AG04449 (cell line): ENCODE measurements at regions of chr22 and their contacts with region 1.

Region 1: GRCh38 chr22:35611891-35612576 is 5.1 kb downstream of the MB start:
- DNase-seq: no peak
- H3K4me3 ChIP-seq: no peak overlapping the region
- CTCF ChIP-seq: no peak

Region 2: GRCh38 chr22:35622191-35622913 is 10.3 kb after region 1 on chr22:
- CTCF ChIA-PET with region 1: interaction called, 14 read pairs
- POLR2A ChIA-PET with region 1: no interaction called
- DNase-seq: no peak
- H3K4me3 ChIP-seq: no peak overlapping the region
- CTCF ChIP-seq: no peak

Region 3: GRCh38 chr22:35821654-35822053 is 209.6 kb after region 1 on chr22:
- CTCF ChIA-PET with region 1: no interaction called
- POLR2A ChIA-PET with region 1: no interaction called
- DNase-seq: no peak
- H3K4me3 ChIP-seq: no peak overlapping the region
- CTCF ChIP-seq: no peak